Activated B cell treated with CpG ODN at 0.5 μM for 24 hours (primary cell): ENCODE measurements at regions of chr21 and their contacts with region 1.

Region 1: GRCh38 chr21:37965088-37965805 is 49.0 kb upstream of the KCNJ6 start:
- DNase-seq: no peak
- ATAC-seq: no peak
- H3K4me3 Mint-ChIP-seq: no peak overlapping the region
- H3K27ac Mint-ChIP-seq: no peak overlapping the region
- H3K4me1 Mint-ChIP-seq: no peaks in the 10 kb centered on the region
- H3K27me3 Mint-ChIP-seq: peaks cover 4% of the 10 kb centered on the region
- CTCF ChIP-seq: no peak

Region 2: DNA sequence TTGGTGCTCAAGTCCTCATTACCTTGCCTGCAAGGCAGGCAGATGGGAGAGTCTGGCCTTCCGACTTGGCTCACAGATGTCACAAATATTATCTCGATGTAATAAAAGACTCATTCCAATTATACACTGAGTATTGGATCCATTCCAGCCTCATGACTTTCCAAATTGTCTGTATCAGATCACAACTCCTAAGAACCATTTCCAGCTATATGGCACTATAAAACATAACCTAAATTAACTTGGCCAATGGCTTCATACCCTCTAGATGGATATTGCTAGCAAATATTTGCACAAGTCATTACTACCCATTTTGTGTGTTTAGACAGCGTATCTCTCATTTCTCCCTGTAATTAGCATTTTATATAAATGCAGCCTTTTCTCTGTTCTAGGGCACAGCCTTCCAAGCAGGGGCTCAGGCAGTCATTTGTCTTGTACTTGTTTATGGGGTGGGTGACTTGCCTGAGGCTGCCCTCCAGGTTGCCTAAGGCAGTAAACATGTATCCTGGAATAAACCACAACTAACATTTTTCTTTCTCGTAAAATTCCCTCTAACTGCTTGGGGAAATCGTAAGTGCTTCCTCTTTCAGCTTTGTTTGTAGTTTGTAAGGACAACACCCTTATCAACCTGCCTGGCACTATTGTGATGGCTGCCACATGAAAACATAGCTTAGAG is 21.6 kb after region 1 on chr21:
- CTCF ChIA-PET with region 1: no interaction called
- POLR2A ChIA-PET with region 1: no interaction called
- intact Hi-C with region 1: no loop called
- DNase-seq: no peak
- ATAC-seq: no peak
- H3K4me3 Mint-ChIP-seq: no peak overlapping the region
- H3K27ac Mint-ChIP-seq: no peak overlapping the region
- H3K4me1 Mint-ChIP-seq: no peaks in the 10 kb centered on the region
- H3K27me3 Mint-ChIP-seq: no peaks in the 10 kb centered on the region
- CTCF ChIP-seq: no peak

Region 3: GRCh38 chr21:38598413-38598812 is 633.2 kb after region 1 on chr21:
- CTCF ChIA-PET with region 1: no interaction called
- POLR2A ChIA-PET with region 1: interaction called, 10 read pairs
- intact Hi-C with region 1: no loop called
- DNase-seq: no peak
- ATAC-seq: no peak
- H3K4me3 Mint-ChIP-seq: no peak overlapping the region
- H3K27ac Mint-ChIP-seq: no peak overlapping the region
- H3K4me1 Mint-ChIP-seq: no peaks in the 10 kb centered on the region
- H3K27me3 Mint-ChIP-seq: no peaks in the 10 kb centered on the region
- CTCF ChIP-seq: no peak